Ovary (tissue), 10 donors: ENCODE measurements at regions of chrX and their contacts with region 1.

Region 1: GRCh38 chrX:10486373-10486772 is 134.0 kb downstream of the MID1 start:
- DNase-seq: no peak
- H3K4me3 ChIP-seq: no peak overlapping the region
- H3K27ac ChIP-seq: no peak overlapping the region
- H3K4me1 ChIP-seq: peaks cover 2% of the 10 kb centered on the region
- H3K27me3 ChIP-seq: no peaks in the 10 kb centered on the region
- CTCF ChIP-seq: no peak
- EP300 ChIP-seq: no peak
- POLR2A ChIP-seq: no peak

Region 2: GRCh38 chrX:10467793-10468192 is 18.6 kb before region 1 on chrX:
- intact Hi-C with region 1: no loop called
- DNase-seq: no peak
- H3K4me3 ChIP-seq: no peak overlapping the region
- H3K27ac ChIP-seq: no peak overlapping the region
- H3K4me1 ChIP-seq: no peaks in the 10 kb centered on the region
- H3K27me3 ChIP-seq: no peaks in the 10 kb centered on the region
- CTCF ChIP-seq: no peak
- EP300 ChIP-seq: no peak
- POLR2A ChIP-seq: no peak

Region 3: DNA sequence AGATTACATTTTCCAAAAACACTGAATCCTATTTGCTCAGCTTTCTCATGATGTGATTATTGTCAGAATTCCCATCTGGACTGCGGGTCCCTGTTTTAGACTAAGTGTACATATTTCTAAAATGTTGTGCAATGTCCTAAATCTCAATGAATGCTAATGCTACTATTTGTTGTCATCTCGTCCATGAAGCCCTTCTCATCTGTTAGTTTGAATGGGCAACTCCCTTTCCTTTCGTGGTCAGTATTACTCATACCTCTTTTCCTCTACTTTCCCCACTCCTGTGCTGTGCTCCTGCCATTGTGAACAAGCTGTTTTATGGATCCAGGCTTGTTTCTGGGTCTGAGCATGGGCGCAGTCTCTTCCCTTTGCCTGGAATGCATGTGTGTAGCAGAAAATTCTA is 43.0 kb after region 1 on chrX:
- intact Hi-C with region 1: loop called in 1 of 4 experiments (anchors 1 kb)
- DNase-seq: no peak
- H3K4me3 ChIP-seq: no peak overlapping the region
- H3K27ac ChIP-seq: no peak overlapping the region
- H3K4me1 ChIP-seq: no peaks in the 10 kb centered on the region
- H3K27me3 ChIP-seq: no peaks in the 10 kb centered on the region
- CTCF ChIP-seq: no peak
- EP300 ChIP-seq: no peak
- POLR2A ChIP-seq: no peak

Region 4: DNA sequence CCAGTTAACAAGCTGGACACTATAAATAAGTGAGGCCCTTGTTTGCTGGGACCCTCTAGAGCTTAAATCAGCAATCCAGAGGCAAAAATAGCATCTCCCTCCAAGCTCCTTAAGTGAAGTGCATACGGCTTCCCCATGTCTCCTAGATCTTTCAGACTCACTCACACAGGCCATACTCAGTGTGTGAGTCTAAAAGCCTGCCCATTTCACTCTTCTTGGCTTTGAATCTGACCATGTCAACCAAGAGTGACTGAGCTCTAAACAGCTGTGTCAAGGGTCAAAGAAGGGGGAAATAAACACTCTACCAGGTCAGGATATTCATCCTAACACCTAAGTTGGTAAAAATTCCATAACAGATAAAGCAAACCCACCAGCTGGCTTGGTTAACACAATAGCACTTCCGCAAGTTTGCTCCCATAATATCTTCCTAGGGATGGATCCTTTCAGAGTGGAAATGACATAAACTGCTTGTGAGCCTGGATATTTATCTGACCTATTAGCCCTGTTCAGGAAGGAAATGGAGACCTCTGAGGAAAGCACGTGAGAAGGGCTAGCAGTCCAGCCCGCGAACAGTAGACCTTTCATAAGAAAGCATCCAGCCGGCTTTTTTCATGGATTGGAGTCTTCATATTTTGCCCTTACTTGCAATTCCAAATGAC is 68.4 kb after region 1 on chrX:
- intact Hi-C with region 1: no loop called
- DNase-seq: no peak
- H3K4me3 ChIP-seq: no peak overlapping the region
- H3K27ac ChIP-seq: no peak overlapping the region
- H3K4me1 ChIP-seq: no peaks in the 10 kb centered on the region
- H3K27me3 ChIP-seq: no peaks in the 10 kb centered on the region
- CTCF ChIP-seq: no peak
- EP300 ChIP-seq: no peak
- POLR2A ChIP-seq: no peak